Motor neuron (in vitro differentiated cells): ENCODE measurements at regions of chr13 and their contacts with region 1.

Region 1: DNA sequence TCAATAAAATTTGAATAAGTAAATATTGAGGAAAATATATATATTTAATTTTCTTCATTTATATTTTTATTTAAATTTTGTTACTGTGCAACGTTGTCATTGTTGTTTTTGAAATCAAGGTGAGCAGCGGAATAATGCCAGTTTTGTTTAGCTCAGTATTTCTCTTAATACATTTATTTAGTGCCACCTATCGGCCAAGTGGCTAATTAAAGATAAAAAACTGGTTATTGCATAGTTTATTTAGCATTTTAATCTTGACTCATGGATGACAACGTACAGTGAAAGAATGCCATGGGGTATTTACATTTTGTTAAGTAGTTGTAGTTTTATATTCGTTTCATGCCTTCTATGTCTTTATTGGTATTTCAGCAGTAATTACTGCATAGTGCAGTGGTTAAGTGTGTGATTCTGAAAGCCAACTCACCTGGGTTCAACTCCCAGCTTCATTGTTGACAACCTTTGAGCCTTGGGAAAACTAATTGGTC is 265.9 kb downstream of the MYO16 start:
- ATAC-seq: peak in 3 of 8 experiments; percentile 66 to 81 (median 74)
- H3K4me3 ChIP-seq: no peak overlapping the region
- H3K27ac ChIP-seq: no peak overlapping the region
- H3K4me1 ChIP-seq: no peaks in the 10 kb centered on the region

Region 2: GRCh38 chr13:108322206-108322824 is 572.9 kb before region 1 on chr13:
- in situ Hi-C with region 1: loop called (anchors 10 to 25 kb)
- ATAC-seq: peak in 7 of 8 experiments; percentile 50 to 89 (median 74)
- H3K4me3 ChIP-seq: no peak overlapping the region
- H3K27ac ChIP-seq: no peak overlapping the region
- H3K4me1 ChIP-seq: peaks cover 0 to 3% of the 10 kb centered on the region in 2 donors

Region 3: GRCh38 chr13:108342369-108343289 is 552.6 kb before region 1 on chr13:
- in situ Hi-C with region 1: loop called in 8 of 9 experiments (anchors 25 kb)
- ATAC-seq: peak in 5 of 8 experiments; percentile 38 to 56 (median 40)
- H3K4me3 ChIP-seq: no peak overlapping the region
- H3K27ac ChIP-seq: no peak overlapping the region
- H3K4me1 ChIP-seq: peaks cover 0 to 9% of the 10 kb centered on the region in 2 donors

Region 4: GRCh38 chr13:108609353-108609752 is 285.9 kb before region 1 on chr13:
- in situ Hi-C with region 1: loop called in 3 of 9 experiments (anchors 25 kb)
- ATAC-seq: peak in 3 of 8 experiments; percentile 59 to 74 (median 64)
- H3K4me3 ChIP-seq: no peak overlapping the region
- H3K27ac ChIP-seq: no peak overlapping the region
- H3K4me1 ChIP-seq: no peaks in the 10 kb centered on the region

Region 5: GRCh38 chr13:108787700-108788414 is 107.4 kb before region 1 on chr13:
- in situ Hi-C with region 1: no loop called
- ATAC-seq: peak in 5 of 8 experiments; percentile 64 to 92 (median 91)
- H3K4me3 ChIP-seq: no peak overlapping the region
- H3K27ac ChIP-seq: peak overlapping the region in 1 of 2 donors; percentile 49
- H3K4me1 ChIP-seq: peaks cover 0 to 32% of the 10 kb centered on the region in 2 donors

Region 6: DNA sequence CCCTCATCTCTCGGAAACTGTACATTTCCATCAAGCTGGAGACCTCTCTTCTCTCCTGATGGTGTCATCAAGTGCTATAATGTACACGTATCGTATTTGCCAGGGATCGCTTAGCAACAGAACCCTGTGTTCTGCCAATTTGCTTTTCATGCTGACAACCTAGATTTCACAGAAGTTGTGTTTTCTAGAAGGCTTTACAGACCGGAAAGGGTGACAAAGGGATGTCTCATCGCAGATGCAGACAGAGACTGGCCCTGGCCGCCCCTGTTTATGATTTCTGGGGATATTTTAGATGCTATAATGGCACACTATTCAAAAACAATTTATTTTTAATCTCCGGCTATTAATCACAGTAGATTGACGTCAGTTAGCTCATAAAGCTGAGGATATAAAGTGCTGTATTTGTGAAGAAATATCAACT is 599.7 kb after region 1 on chr13:
- in situ Hi-C with region 1: no loop called
- ATAC-seq: peak in 6 of 8 experiments; percentile 41 to 97 (median 96)
- H3K4me3 ChIP-seq: no peak overlapping the region
- H3K27ac ChIP-seq: peak overlapping the region in 1 of 2 donors; percentile 33
- H3K4me1 ChIP-seq: peaks cover 13 to 14% of the 10 kb centered on the region in 2 donors